ENCODE measurements at regions of chr3 and their contacts with region 1.

Region 1: DNA sequence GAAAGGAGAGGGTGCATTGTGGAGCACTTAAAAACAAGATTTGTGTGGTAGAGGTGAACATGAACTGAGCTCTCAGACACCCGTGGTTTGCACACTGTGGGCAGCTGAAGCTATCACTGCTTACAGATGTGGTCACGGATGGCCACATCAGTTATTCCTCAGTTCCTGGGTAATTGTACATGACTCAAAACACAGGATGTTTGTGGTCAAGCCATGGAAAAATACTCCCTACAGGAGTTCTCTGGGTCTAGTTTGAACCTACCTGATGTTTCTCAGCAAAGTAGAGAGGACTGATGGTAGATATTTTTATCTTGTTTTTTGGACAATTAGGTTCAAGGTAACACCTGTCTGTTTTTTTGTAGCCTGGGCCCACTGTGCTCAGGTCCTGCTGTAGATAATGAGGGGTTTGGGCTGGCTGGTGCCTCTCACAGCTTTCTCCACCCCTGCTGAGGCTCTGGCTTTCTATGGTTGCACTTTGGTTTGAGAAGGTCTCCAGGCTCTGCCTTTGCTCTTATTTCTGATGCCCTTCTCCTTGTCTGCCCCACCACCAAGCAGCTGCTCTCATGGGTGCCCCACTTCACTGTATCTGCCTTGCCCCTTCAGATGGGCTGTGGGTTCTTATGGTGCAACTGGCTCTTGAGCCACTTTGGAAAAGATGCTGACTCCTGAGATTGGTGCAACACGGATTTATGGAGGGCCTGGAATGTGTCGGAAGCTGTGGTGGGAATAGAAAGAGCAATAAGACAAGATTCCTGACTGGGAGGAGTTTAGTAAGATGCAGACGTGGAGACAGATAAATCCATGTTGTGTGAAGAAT is 40.1 kb downstream of the CDCP1 start:
- DNase-seq: peak; percentile 78
- H3K4me3 Mint-ChIP-seq: peak overlapping the region; percentile 31
- H3K27ac Mint-ChIP-seq: peak overlapping the region; percentile 86
- H3K4me1 Mint-ChIP-seq: peaks cover 73% of the 10 kb centered on the region
- H3K27me3 Mint-ChIP-seq: no peaks in the 10 kb centered on the region

Region 2: GRCh38 chr3:45043728-45044299 is 62.2 kb before region 1 on chr3:
- intact Hi-C with region 1: loop called (anchors 1 kb)
- DNase-seq: no peak
- H3K4me3 Mint-ChIP-seq: no peak overlapping the region
- H3K27ac Mint-ChIP-seq: no peak overlapping the region
- H3K4me1 Mint-ChIP-seq: peaks cover 33% of the 10 kb centered on the region
- H3K27me3 Mint-ChIP-seq: peaks cover 16% of the 10 kb centered on the region

Region 3: GRCh38 chr3:45119824-45120614 is 14.0 kb after region 1 on chr3:
- intact Hi-C with region 1: loop called (anchors 1 kb)
- DNase-seq: no peak
- H3K4me3 Mint-ChIP-seq: no peak overlapping the region
- H3K27ac Mint-ChIP-seq: peak overlapping the region; percentile 18
- H3K4me1 Mint-ChIP-seq: peaks cover 65% of the 10 kb centered on the region
- H3K27me3 Mint-ChIP-seq: no peaks in the 10 kb centered on the region

Region 4: DNA sequence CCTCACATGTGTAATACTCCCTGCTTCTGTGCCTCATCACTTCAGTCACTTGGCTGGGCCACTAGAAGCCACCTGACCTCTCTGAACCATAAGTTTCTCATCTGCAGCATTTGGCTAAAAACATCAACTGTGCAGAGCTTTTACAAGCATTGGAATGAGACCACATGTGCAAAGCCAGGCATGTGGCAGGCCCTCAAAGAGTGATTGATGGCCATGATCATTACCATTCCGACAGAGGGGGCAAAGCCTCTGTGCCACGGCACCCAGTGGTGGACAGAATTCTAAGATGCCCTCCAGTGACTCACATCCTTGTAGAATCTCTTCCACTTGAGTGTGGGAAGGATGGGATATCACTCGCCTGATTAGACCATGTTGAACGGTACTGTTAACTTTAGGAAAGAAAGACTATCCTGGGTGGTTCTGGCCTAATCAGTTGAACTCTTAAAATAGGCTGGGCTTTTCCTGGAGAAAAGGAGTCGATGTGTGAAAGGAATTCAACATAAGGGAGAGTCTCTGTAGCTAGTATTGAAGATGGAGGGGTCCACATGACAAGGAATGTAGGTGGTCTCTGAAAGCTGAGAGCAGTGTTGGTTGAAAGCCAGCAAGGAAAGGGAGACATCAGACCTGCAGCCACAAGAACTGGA is 26.6 kb after region 1 on chr3:
- intact Hi-C with region 1: no loop called
- DNase-seq: no peak
- H3K4me3 Mint-ChIP-seq: no peak overlapping the region
- H3K27ac Mint-ChIP-seq: no peak overlapping the region
- H3K4me1 Mint-ChIP-seq: peaks cover 24% of the 10 kb centered on the region
- H3K27me3 Mint-ChIP-seq: no peaks in the 10 kb centered on the region

Region 5: DNA sequence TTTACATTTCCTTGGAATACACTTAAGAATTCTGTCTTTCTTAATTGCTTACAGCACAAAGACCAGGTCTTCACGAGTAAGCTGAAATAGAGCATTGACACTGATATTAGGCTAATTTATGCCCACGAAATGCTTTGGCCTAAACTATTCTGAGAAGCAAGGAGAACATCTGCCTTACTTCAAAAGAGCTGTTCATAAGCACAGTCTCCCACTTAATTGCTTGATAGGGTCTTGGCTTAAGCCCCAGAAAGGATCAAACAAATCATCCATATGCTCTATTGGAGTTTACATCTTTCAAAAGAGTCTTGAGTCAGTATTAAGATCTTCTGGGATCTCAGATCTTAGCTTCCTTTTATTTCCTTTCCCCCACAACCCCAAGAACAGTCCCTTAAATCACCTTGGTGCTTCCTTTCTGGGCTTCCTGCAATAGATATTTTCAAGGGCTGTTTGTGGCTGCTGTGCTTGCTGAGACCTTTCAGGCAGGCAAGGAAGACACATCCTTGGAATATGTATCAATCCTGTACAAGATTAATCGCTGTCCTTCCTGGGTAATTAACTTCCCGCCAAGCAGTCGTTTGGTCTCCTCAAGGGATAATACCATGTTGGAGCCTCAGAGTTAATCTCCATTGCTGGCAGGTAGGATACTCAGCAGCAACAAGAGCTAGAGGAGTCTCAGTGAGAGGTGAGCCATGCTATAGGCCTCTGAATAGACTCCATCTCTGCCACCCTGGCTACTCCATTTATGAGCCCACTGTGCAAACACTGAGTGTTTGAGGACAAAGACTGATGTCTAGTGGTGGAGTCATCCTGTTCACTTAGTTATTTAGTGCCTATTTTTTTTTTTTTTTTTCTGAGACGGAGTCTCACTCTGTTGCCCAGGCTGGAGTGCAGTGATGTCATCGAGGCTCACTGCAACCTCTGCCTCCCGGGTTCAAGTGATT is 82.9 kb after region 1 on chr3:
- intact Hi-C with region 1: loop called (anchors 2 kb)
- DNase-seq: no peak
- H3K4me3 Mint-ChIP-seq: no peak overlapping the region
- H3K27ac Mint-ChIP-seq: no peak overlapping the region
- H3K4me1 Mint-ChIP-seq: peaks cover 46% of the 10 kb centered on the region
- H3K27me3 Mint-ChIP-seq: peaks cover 2% of the 10 kb centered on the region

Region 6: GRCh38 chr3:45253316-45253715 is 147.3 kb after region 1 on chr3:
- intact Hi-C with region 1: no loop called
- DNase-seq: no peak
- H3K4me3 Mint-ChIP-seq: no peak overlapping the region
- H3K27ac Mint-ChIP-seq: no peak overlapping the region
- H3K4me1 Mint-ChIP-seq: no peaks in the 10 kb centered on the region
- H3K27me3 Mint-ChIP-seq: peaks cover 16% of the 10 kb centered on the region

Region 7: DNA sequence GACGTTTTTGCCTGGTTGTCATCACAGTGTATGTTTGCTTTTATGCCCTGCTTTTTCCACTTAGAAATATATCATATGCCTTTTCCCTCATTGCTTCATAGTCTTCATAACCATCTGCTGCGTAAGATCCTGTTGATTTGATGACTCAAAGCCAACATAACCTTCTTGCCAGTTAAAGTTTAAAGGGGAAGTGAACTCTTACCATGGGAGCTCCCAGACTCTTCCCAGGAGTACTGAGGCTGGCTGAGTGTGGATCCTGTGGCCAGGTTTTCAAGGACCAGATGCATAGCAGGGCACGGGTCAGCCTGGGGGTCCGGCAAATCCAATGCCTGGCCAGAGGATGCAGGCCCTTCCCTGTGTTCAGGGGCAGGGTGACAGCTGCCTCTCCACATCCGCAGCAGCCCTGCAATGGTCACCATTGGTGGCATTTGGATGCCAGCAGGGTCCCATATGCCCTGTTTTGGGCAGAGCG is 541.1 kb after region 1 on chr3:
- intact Hi-C with region 1: no loop called
- DNase-seq: no peak
- H3K4me3 Mint-ChIP-seq: no peak overlapping the region
- H3K27ac Mint-ChIP-seq: no peak overlapping the region
- H3K4me1 Mint-ChIP-seq: peaks cover 18% of the 10 kb centered on the region
- H3K27me3 Mint-ChIP-seq: no peaks in the 10 kb centered on the region

Region 8: GRCh38 chr3:45688882-45689756 is 583.1 kb after region 1 on chr3 and contains the start of gene SACM1L:
- intact Hi-C with region 1: loop called (anchors 10 kb)
- DNase-seq: peak; percentile 97
- H3K4me3 Mint-ChIP-seq: peak within 1 kb of the TSS; percentile 93
- H3K27ac Mint-ChIP-seq: peak within 1 kb of the TSS; percentile 93
- H3K4me1 Mint-ChIP-seq: peaks cover 40% of the 10 kb centered on the region
- H3K27me3 Mint-ChIP-seq: peaks cover 2% of the 10 kb centered on the region
- total RNA-seq, gene SACM1L: 105 and 107 TPM in 2 replicates